HepG2 (cell line): ENCODE measurements at regions of chr2 and their contacts with region 1.

Region 1: GRCh38 chr2:117917223-117917917 is 96.5 kb downstream of the CCDC93 start:
- DNase-seq: peak; percentile 82
- ATAC-seq: peak; percentile 96
- H3K4me3 ChIP-seq: no peak overlapping the region
- H3K27ac ChIP-seq: peak overlapping the region; percentile 64
- H3K4me1 ChIP-seq: peaks cover 22% of the 10 kb centered on the region
- H3K27me3 ChIP-seq: no peaks in the 10 kb centered on the region
- CTCF ChIP-seq: peak; percentile 91
- EP300 ChIP-seq: no peak; a peak in 1 of 4 replicates
- POLR2A ChIP-seq: no peak
- RAD21 ChIP-seq: peak; percentile 77

Region 2: GRCh38 chr2:117481608-117482007 is 435.8 kb before region 1 on chr2:
- CTCF ChIA-PET with region 1: no interaction called
- POLR2A ChIA-PET with region 1: no interaction called
- in situ Hi-C with region 1: no loop called
- intact Hi-C with region 1: no loop called
- DNase-seq: no peak
- ATAC-seq: no peak
- H3K4me3 ChIP-seq: no peak overlapping the region
- H3K27ac ChIP-seq: no peak overlapping the region
- H3K4me1 ChIP-seq: no peaks in the 10 kb centered on the region
- H3K27me3 ChIP-seq: no peaks in the 10 kb centered on the region
- CTCF ChIP-seq: no peak
- EP300 ChIP-seq: no peak
- POLR2A ChIP-seq: no peak
- RAD21 ChIP-seq: no peak

Region 3: DNA sequence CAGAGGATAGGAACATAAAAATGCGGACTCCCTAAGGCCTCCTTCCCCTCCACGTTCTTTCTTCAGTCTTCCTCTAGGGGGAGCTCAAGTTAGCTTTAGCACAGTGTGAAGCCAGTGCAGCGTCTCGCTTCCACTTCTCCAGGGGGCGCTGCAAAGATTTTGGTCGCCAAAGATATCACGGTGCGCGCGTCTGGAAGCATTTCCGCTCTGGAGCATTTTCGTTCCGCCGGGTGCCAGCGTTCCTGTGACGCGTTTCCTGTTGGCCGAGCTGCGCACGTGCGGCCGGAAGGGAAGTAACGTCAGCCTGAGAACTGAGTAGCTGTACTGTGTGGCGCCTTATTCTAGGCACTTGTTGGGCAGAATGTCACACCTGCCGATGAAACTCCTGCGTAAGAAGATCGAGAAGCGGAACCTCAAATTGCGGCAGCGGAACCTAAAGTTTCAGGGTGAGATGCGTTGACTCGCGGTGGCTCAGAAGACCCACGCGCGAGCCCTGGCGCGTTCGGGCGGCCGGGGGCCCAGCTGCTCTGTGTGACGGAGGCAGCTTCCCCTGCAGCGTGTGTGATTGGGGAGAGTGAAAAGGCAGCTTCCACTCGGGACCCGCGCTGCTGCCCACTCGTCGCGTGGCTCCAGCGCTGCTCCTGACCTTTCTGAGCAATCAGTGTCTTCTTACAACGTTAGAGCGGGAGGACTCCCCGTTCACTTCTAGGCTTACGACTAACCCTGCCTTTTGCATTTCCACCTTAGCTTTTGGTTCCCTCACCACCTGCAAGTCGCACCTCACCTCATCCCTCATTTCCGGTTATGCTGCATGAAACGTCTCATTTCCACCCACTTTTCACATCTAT is 102.7 kb before region 1 on chr2 and contains the start of gene DDX18:
- CTCF ChIA-PET with region 1: interaction called, 16 read pairs
- POLR2A ChIA-PET with region 1: no interaction called
- in situ Hi-C with region 1: no loop called
- intact Hi-C with region 1: loop called (anchors 1 kb)
- DNase-seq: peak; percentile 99
- ATAC-seq: peak; percentile 98
- H3K4me3 ChIP-seq: peak within 1 kb of the TSS; percentile 85 to 96 (median 90)
- H3K27ac ChIP-seq: peak within 1 kb of the TSS; percentile 80
- H3K4me1 ChIP-seq: peaks cover 31% of the 10 kb centered on the region
- H3K27me3 ChIP-seq: no peaks in the 10 kb centered on the region; a peak in 1 of 5 replicates
- CTCF ChIP-seq: peak; percentile 100
- EP300 ChIP-seq: peak; percentile 9 to 60; a peak in 2 of 4 replicates
- POLR2A ChIP-seq: peak; percentile 91 to 95
- RAD21 ChIP-seq: peak; percentile 89
- total RNA-seq, gene DDX18: 134 and 234 TPM in 2 replicates

Region 4: GRCh38 chr2:117835990-117836760 is 81.2 kb before region 1 on chr2:
- CTCF ChIA-PET with region 1: interaction called, 14 read pairs
- POLR2A ChIA-PET with region 1: no interaction called
- in situ Hi-C with region 1: loop called (anchors 5 kb)
- intact Hi-C with region 1: loop called (anchors 1 kb)
- DNase-seq: peak; percentile 54
- ATAC-seq: peak; percentile 92
- H3K4me3 ChIP-seq: peak overlapping the region in 2 of 3 experiments; percentile 19 to 62; a peak in 3 of 6 replicates
- H3K27ac ChIP-seq: no peak overlapping the region
- H3K4me1 ChIP-seq: no peaks in the 10 kb centered on the region
- H3K27me3 ChIP-seq: no peaks in the 10 kb centered on the region
- CTCF ChIP-seq: peak; percentile 80
- EP300 ChIP-seq: no peak
- POLR2A ChIP-seq: no peak; a peak in 1 of 4 replicates
- RAD21 ChIP-seq: peak; percentile 80

Region 5: DNA sequence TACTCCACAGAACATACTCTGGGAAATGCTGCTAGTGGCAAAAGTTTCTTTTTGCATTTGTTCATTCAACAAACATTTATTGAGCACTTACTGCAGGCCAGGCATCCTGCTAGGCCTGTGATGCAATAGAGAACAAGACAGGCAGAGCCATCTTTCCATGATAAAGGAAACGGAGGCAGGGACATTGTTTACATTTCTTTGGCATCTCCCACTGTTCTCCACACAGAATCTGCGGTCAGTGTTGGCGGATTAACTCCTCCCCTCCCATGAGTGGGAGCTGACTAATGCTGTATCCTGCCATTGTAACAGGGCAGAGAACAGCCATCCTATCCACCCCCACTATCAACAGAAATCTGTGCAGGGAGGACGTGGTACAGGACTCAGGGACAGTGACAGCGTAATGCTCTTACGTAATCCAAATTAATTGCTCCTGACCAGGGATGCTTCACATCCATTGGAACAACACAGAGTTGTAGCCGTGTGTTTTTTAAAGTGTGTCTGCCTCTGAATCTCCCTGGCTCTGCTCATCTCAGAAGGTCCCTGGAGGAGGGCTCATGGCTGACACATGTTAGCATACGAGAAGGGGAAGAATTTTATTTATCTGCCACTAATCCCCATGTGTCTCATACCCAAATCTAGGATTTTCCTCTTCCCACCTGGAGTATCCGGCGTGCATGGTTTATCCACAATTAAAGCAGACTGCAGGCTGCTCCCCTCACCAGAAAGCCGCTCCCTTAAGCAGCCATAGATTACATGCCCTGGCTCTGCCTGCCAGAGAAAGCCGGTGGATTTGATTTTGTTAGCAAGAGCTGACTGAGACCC is 1338.6 kb after region 1 on chr2:
- CTCF ChIA-PET with region 1: no interaction called
- POLR2A ChIA-PET with region 1: no interaction called
- in situ Hi-C with region 1: no loop called
- intact Hi-C with region 1: loop called (anchors 5 kb)
- DNase-seq: peak; percentile 38
- ATAC-seq: no peak
- H3K4me3 ChIP-seq: no peak overlapping the region
- H3K27ac ChIP-seq: no peak overlapping the region
- H3K4me1 ChIP-seq: peaks cover 5% of the 10 kb centered on the region; the same call in 1 of the 2 replicates
- H3K27me3 ChIP-seq: no peaks in the 10 kb centered on the region
- CTCF ChIP-seq: no peak
- EP300 ChIP-seq: no peak
- POLR2A ChIP-seq: no peak
- RAD21 ChIP-seq: no peak